Activated CD8-positive, alpha-beta T cell treated with anti-CD3 and anti-CD28 coated beads, Interleukin-2, amount 10 ng/mL, durations not matched to agents 7 days and 5 days (primary cell): ENCODE measurements at regions of chr1 and their contacts with region 1.

Region 1: GRCh38 chr1:11749203-11749689 is 12.7 kb upstream of the C1orf167 start:
- DNase-seq: peak; percentile 84
- ATAC-seq: peak; percentile 96
- H3K4me3 Mint-ChIP-seq: peak overlapping the region; percentile 20
- H3K27ac Mint-ChIP-seq: peak overlapping the region; percentile 88
- H3K4me1 Mint-ChIP-seq: peaks cover 47% of the 10 kb centered on the region
- H3K27me3 Mint-ChIP-seq: no peaks in the 10 kb centered on the region

Region 2: GRCh38 chr1:11563560-11564069 is 185.6 kb before region 1 on chr1:
- CTCF ChIA-PET with region 1: no interaction called
- POLR2A ChIA-PET with region 1: no interaction called
- DNase-seq: no peak
- ATAC-seq: no peak
- H3K4me3 Mint-ChIP-seq: no peak overlapping the region
- H3K27ac Mint-ChIP-seq: no peak overlapping the region
- H3K4me1 Mint-ChIP-seq: no peaks in the 10 kb centered on the region
- H3K27me3 Mint-ChIP-seq: peaks cover 12% of the 10 kb centered on the region

Region 3: DNA sequence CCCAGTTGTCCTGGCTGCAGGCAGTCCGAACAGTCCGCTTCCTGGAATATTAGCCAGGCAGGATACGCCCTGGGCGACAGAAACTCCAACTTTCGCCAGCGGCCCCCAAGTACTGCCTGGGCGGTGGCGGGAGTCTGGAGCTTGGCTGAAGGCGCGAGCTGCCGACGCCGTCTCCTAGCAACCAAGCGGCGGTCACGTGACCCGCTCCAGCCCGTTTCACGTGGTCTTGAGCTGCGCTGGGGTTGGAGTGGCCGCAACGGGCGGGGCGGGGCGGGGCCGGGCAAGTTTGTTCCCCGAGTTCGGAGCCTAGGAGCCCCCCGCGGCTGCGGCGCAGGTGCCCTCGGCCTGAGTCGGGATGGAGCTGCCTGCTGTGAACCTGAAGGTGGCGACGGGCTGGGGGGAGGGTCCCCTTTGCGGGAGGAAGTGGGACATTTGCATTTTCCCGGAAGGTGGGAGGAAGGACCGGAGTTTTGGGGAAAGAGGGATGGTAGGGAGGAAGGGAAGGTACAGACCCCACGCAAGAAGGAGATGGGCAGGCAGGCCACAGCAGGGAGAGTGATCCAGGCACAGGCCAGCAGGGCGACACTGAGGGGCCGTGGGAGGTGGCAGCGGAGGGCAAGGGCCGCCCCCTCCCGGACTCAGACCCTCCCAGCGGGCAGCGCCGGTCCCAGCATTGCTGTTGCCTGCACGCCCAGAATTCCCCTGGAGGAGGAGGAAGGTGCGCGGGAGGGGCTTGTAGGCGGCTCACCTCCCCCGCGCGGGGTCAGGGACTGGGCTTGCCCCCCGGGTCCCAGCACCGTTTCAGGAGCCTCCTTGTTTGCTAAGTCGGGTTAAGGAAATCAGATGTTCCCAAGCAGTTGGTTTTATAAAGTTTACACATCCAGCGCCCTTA is 13.1 kb before region 1 on chr1 and contains the start of gene AGTRAP:
- CTCF ChIA-PET with region 1: interaction called, 10 read pairs
- POLR2A ChIA-PET with region 1: interaction called, 3 read pairs
- DNase-seq: peak; percentile 94
- ATAC-seq: peak; percentile 81
- H3K4me3 Mint-ChIP-seq: peak within 1 kb of the TSS; percentile 98
- H3K27ac Mint-ChIP-seq: peak within 1 kb of the TSS; percentile 91
- H3K4me1 Mint-ChIP-seq: peaks cover 74% of the 10 kb centered on the region
- H3K27me3 Mint-ChIP-seq: no peaks in the 10 kb centered on the region
- total RNA-seq, gene AGTRAP: 82.5 to 84.2 TPM

Region 4: DNA sequence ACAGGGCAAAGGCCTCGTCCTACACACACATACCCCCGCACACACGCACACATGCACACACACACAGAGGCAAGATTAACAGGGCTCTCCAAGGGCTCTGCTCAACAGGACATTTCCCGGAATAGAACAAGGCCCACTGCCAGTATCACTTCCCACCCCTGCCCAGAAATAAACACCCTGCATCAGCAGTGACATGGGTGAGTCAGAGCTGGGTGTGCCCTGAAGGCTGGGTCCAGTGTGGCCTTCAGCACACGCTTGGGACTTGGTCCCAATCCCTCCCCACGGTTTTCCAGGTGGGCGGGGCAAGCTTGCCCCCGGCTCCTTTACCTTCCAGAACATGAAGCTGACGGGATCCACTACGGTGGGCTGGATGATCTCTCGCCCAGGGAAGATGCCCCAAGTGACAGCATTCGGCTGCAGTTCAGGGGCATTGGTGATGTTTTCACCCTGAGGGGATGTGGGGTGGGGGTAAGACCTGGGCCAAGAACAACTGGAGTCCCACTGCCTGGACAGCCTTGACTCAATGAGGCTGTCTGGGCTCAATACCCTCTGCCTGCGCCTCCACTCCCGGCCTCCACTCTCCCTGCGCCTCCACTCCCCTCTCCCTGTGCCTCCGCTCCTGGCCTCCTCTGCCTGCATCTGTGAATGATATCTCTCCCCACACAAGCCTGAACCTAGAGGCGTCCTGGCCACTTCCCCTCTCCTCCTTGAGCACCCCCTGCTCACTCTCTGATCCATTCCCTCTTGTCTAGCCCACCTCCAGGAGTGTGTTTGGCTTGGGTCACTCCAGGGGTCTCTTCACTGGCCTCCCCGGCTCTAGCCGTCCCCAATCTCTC is 41.9 kb after region 1 on chr1:
- CTCF ChIA-PET with region 1: no interaction called
- POLR2A ChIA-PET with region 1: no interaction called
- DNase-seq: no peak
- ATAC-seq: no peak
- H3K4me3 Mint-ChIP-seq: no peak overlapping the region
- H3K27ac Mint-ChIP-seq: no peak overlapping the region
- H3K4me1 Mint-ChIP-seq: no peaks in the 10 kb centered on the region
- H3K27me3 Mint-ChIP-seq: no peaks in the 10 kb centered on the region